PC-9 (cell line): ENCODE measurements at regions of chr3 and their contacts with region 1.

Region 1: DNA sequence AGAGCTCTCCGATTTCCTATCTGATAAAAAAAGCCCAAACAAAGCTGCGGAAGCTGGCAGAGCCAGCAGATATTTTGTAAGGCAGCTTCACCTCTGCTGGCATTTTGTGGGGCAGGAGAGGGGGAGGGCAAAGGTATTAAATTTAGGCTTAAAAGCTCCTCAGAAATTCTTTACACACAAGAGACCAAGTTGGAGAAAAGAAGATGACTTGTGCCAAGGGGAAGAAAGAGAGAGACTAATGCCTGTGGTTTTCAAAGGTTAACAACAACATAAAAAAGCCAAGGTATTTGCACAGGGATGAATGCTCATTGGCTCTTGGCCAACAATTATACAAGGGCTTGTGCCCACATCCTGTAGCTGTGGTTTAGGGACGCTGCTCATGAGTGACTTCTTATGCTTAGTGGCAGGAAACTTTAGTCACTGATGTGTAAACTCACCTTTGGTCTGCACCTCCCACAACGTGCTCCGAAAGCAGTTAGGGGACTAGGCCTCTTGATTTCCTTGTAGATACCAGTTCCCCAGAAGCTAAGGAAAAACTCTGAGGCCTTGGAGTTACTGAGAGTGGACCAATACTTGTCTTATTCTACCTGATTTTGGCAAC is 152.9 kb downstream of the TPRG1 start:
- DNase-seq: peak; percentile 92 to 100
- H3K4me3 ChIP-seq: no peak overlapping the region
- H3K27ac ChIP-seq: peak overlapping the region; percentile 89
- H3K4me1 ChIP-seq: peaks cover 40% of the 10 kb centered on the region
- H3K27me3 ChIP-seq: no peaks in the 10 kb centered on the region
- CTCF ChIP-seq: no peak

Region 2: GRCh38 chr3:187738331-187739093 is 1586.1 kb before region 1 on chr3:
- CTCF ChIA-PET with region 1: interaction called, 4 read pairs
- POLR2A ChIA-PET with region 1: no interaction called
- intact Hi-C with region 1: loop called (anchors 10 kb)
- DNase-seq: peak; percentile 82 to 87
- H3K4me3 ChIP-seq: peak overlapping the region; percentile 53
- H3K27ac ChIP-seq: 0 out of 2 replicates have a peak overlapping the region, but pooled peaks have one; percentile 3
- H3K4me1 ChIP-seq: peaks cover 55% of the 10 kb centered on the region
- H3K27me3 ChIP-seq: no peaks in the 10 kb centered on the region
- CTCF ChIP-seq: peak; percentile 85

Region 3: DNA sequence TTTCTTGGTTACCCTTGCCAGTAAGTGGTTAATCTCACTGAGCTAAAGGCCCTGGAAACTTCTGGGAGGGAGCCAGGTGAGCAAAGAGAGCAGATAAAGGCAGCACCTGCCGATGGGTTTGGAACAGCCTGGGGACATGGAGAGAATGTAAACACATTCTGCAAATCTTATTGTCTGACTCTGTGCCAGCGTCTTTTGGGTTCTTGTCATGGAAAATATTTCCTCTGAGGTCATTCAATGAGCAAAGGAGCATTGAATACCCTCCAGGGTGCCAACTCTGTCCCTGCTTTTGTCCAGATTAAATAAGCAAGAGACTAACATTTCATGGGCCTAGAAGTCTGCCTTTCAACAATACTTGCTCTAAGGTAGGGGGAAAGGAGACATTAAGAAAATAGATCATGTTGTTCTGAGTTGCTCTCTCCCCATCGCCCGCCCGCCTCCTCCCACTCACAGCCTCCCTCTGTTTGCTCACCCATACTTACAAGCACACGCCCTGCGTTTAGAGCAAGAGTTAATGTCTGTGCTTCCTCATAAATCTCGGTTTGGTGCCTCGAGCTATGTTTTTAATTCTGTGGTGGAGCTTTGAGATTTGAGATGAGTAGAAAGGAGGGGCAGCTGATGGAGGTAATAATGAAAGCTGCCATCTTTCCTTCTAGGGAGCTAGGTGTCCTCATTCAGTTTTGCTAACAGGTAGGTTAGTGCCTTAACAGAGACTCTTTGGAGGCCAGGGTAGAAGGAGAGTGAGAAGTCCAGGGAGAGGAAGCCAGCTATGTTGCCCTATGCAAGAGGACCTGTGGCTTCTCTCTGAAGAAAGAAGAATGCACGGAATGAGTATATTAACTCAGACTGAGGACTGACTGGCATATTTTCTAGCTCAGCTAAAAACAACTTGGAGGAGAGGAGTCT is 19.9 kb before region 1 on chr3:
- CTCF ChIA-PET with region 1: interaction called, 13 read pairs
- POLR2A ChIA-PET with region 1: interaction called, 15 read pairs
- intact Hi-C with region 1: loop called (anchors 1 kb)
- DNase-seq: peak; percentile 93 to 99
- H3K4me3 ChIP-seq: peak overlapping the region; percentile 27; the same call in 1 of the 2 replicates
- H3K27ac ChIP-seq: peak overlapping the region; percentile 85
- H3K4me1 ChIP-seq: peaks cover 44% of the 10 kb centered on the region
- H3K27me3 ChIP-seq: no peaks in the 10 kb centered on the region
- CTCF ChIP-seq: no peak

Region 4: DNA sequence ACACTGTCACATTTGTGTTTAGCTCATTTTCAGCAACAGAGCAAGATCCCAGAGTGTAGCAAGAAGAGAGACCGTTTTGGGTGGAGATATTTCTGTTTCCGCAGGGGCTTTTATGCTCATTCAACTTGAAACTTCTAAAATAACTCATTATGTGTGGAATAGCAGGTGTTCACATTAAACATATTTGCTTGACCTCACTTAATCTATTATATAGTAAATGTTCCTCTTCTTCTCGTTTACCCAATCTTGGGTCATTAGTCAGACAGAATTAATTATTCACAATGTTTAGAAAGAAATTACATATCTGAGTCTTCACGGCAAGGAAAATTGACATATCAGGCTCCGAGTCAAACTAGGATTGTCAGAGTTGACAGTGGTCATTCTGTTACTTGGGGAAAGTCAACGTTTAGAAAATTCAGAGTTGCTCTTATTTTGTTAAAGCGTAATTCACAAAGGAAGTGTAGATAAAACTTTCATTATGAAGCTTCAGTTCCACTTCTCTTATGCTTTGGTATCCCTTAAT is 70.0 kb after region 1 on chr3:
- CTCF ChIA-PET with region 1: no interaction called
- POLR2A ChIA-PET with region 1: no interaction called
- intact Hi-C with region 1: loop called (anchors 1 kb)
- DNase-seq: no peak
- H3K4me3 ChIP-seq: no peak overlapping the region
- H3K27ac ChIP-seq: peak overlapping the region; percentile 89
- H3K4me1 ChIP-seq: peaks cover 36% of the 10 kb centered on the region
- H3K27me3 ChIP-seq: no peaks in the 10 kb centered on the region
- CTCF ChIP-seq: no peak

Region 5: GRCh38 chr3:189563866-189564563 is 239.4 kb after region 1 on chr3:
- CTCF ChIA-PET with region 1: no interaction called
- POLR2A ChIA-PET with region 1: no interaction called
- intact Hi-C with region 1: loop called (anchors 2 kb)
- DNase-seq: peak; percentile 68 to 92
- H3K4me3 ChIP-seq: no peak overlapping the region
- H3K27ac ChIP-seq: peak overlapping the region; percentile 78
- H3K4me1 ChIP-seq: peaks cover 27% of the 10 kb centered on the region
- H3K27me3 ChIP-seq: no peaks in the 10 kb centered on the region
- CTCF ChIP-seq: no peak

Region 6: DNA sequence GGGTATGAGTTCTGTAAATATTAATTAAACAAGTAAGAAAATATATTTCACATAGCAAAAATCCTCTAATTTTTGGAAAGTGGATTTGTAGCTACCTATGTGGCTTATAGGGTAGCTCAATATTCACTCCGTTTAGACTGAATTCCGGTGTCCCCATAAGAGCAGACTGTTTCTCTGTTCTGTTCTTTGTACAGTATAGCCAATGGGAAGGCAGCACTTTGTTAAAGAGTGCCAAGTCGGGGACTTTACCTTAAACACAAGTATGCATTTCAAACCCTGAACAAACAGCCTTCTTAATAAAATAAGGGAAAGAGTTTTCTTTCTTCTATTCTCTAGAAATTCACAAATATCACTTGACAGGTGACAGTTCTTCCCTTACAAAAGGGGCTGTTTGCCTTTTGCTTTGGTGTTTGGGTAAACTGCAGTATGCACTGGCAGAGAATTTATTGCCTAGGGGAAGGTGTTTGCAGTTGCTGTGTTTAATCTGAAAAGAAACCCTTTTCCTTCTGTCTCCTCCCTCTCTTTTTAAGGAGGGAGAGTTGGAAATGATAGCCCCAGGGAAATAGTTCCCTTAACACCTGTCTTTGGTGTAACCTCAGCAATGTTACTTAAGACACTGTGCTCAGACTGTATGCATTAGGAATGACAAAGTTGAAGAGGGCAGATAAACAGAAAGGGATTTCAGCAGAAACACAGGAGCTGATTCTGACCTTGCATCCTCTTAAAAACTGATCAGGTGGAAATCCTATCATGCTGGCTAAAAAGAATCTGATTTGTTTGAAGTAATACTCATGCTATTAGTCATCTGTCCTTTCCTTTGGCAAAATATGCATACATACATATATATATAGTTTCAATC is 431.8 kb after region 1 on chr3:
- CTCF ChIA-PET with region 1: interaction called, 3 read pairs
- POLR2A ChIA-PET with region 1: interaction called, 4 read pairs
- intact Hi-C with region 1: loop called (anchors 1 kb)
- DNase-seq: peak; percentile 58 to 100
- H3K4me3 ChIP-seq: no peak overlapping the region; the same call in 1 of the 2 replicates
- H3K27ac ChIP-seq: peak overlapping the region; percentile 93
- H3K4me1 ChIP-seq: peaks cover 40% of the 10 kb centered on the region
- H3K27me3 ChIP-seq: no peaks in the 10 kb centered on the region
- CTCF ChIP-seq: no peak